ENCODE measurements at regions of chr20 and their contacts with region 1.

Region 1: GRCh38 chr20:53869466-53870258 is 200.7 kb downstream of the BCAS1 start:
- DNase-seq: peak; percentile 85
- H3K4me3 Mint-ChIP-seq: peak overlapping the region; percentile 57
- H3K27ac Mint-ChIP-seq: peak overlapping the region; percentile 90
- H3K4me1 Mint-ChIP-seq: peaks cover 67% of the 10 kb centered on the region
- H3K27me3 Mint-ChIP-seq: no peaks in the 10 kb centered on the region

Region 2: GRCh38 chr20:53364646-53365045 is 505.0 kb before region 1 on chr20:
- CTCF ChIA-PET with region 1: no interaction called
- intact Hi-C with region 1: no loop called
- DNase-seq: no peak
- H3K4me3 Mint-ChIP-seq: no peak overlapping the region
- H3K27ac Mint-ChIP-seq: no peak overlapping the region
- H3K4me1 Mint-ChIP-seq: peaks cover 5% of the 10 kb centered on the region
- H3K27me3 Mint-ChIP-seq: no peaks in the 10 kb centered on the region

Region 3: DNA sequence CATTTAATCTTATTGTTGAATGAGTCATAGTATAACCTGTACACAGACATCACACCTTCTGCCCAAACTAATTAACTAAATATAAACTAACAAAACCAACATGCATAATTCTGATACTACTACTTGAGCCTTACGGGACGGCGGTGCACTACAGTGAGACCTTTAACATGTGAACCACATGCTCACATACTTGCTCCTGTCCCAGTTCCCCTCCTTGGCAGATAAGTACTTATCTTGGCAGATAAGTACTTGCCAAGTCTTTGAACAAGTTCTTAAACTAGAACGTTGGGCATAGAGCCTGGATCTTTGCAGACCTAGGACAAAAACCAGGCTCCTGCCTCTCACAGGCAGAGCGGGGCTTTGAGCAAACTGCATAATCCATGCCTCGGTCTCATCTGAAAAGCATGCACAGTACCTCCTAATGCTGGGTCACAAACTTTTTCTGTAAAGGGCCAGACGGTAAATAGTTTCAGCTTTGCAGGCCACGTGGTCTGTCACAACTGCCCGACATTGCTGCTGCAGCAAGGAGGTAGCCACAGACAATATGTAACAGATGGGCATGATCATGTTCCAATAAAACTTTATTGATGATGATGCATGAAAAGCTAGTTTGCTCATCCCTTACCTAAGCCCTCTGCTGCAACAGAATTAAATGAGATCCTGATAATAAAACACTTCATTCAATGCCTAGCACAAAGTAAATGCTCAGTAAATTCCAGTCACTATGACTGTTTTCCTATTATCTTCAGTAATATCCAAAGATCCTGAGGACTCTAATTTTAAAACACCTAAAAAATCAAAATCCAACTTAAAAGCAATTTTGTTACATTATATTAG is 298.9 kb before region 1 on chr20:
- CTCF ChIA-PET with region 1: no interaction called
- intact Hi-C with region 1: no loop called
- DNase-seq: no peak
- H3K4me3 Mint-ChIP-seq: no peak overlapping the region
- H3K27ac Mint-ChIP-seq: no peak overlapping the region
- H3K4me1 Mint-ChIP-seq: peaks cover 62% of the 10 kb centered on the region
- H3K27me3 Mint-ChIP-seq: no peaks in the 10 kb centered on the region

Region 4: GRCh38 chr20:53652090-53652858 is 217.4 kb before region 1 on chr20:
- CTCF ChIA-PET with region 1: interaction called, 4 read pairs
- intact Hi-C with region 1: loop called (anchors 2 kb)
- DNase-seq: peak; percentile 26
- H3K4me3 Mint-ChIP-seq: peak overlapping the region; percentile 65
- H3K27ac Mint-ChIP-seq: peak overlapping the region; percentile 93
- H3K4me1 Mint-ChIP-seq: peaks cover 43% of the 10 kb centered on the region
- H3K27me3 Mint-ChIP-seq: no peaks in the 10 kb centered on the region

Region 5: DNA sequence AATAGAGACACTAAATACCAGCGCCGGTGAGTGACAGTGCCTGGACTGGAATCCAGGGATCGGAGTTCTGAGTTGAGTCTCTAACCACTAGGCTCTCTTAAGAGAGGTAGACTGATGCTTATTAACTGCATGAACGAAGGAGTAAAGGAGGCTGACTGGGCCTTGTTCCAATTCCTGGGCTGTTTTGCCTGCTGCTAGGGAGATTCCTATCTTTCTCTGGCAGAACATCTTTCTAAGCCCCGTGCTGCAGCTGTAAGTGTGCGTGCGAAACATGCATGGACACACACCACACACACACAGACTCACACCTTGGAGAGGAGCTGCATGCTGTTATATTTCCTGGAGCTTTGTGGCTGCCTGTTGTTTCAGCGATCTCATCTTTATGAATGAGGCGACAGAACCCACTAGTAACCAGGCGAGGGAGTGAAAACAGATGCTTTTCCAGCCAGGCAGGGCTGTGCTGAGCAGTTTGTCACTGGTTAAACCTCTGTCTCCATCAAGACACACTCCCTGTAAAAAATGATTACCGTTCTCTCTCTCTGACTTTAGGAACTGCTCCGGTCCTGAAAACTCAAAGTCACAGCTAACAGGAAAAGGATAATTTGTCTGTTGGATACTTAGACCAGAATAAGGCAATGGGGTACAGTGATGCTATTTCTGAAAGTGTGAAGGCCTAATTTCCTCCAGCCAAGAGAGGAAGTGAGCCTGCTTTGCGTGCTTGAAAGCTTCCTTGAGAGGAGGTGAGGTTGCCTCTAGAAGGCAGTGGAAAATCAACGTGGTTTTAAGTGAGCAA is 118.6 kb before region 1 on chr20:
- CTCF ChIA-PET with region 1: interaction called, 5 read pairs
- intact Hi-C with region 1: loop called (anchors 1 kb)
- DNase-seq: peak; percentile 66
- H3K4me3 Mint-ChIP-seq: peak overlapping the region; percentile 32
- H3K27ac Mint-ChIP-seq: peak overlapping the region; percentile 91
- H3K4me1 Mint-ChIP-seq: peaks cover 71% of the 10 kb centered on the region
- H3K27me3 Mint-ChIP-seq: no peaks in the 10 kb centered on the region

Region 6: GRCh38 chr20:53800808-53801604 is 68.7 kb before region 1 on chr20:
- CTCF ChIA-PET with region 1: no interaction called
- intact Hi-C with region 1: no loop called
- DNase-seq: no peak
- H3K4me3 Mint-ChIP-seq: no peak overlapping the region
- H3K27ac Mint-ChIP-seq: no peak overlapping the region
- H3K4me1 Mint-ChIP-seq: no peaks in the 10 kb centered on the region
- H3K27me3 Mint-ChIP-seq: no peaks in the 10 kb centered on the region

Region 7: GRCh38 chr20:53891306-53891944 is 21.8 kb after region 1 on chr20:
- CTCF ChIA-PET with region 1: no interaction called
- intact Hi-C with region 1: loop called (anchors 1 kb)
- DNase-seq: no peak
- H3K4me3 Mint-ChIP-seq: no peak overlapping the region
- H3K27ac Mint-ChIP-seq: no peak overlapping the region
- H3K4me1 Mint-ChIP-seq: peaks cover 48% of the 10 kb centered on the region
- H3K27me3 Mint-ChIP-seq: no peaks in the 10 kb centered on the region

Region 8: DNA sequence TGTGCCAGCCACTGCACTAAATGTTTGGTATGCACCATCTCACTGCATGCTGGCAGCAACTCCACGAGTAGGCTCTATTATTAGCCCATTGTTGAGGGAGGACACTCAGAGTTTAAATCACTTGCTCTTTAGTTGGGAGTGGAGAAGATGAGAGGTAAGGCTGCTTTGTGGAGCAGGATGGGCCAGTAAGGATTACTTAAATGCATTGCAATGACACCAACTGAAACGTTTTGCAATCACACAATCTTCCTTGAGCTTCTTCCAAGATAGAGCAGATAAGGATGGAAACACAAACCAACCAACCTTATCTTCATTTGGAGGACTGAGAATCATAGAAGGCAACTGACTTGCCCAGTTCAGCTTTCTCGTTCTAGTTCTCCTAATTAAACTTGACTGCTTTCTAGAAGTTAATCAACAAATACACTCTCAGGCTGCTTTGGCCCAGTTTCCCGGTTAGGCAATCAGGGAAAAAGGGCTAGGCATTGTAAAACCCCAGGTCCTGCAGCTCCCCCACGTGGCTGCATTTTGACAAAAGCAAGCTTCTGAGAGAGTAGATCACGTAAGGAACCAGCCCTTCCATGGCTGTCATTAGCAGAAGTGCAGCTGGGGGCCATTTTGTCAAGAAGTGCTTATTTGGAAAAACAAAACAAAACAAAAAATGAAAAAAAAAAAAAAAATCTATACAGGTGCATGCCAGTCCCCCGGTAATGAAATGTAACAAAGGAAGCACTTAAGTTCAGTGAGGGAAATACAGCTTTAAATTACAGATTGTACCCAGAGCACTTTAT is 70.1 kb after region 1 on chr20:
- CTCF ChIA-PET with region 1: interaction called, 6 read pairs
- intact Hi-C with region 1: loop called (anchors 2 kb)
- DNase-seq: peak; percentile 92
- H3K4me3 Mint-ChIP-seq: no peak overlapping the region
- H3K27ac Mint-ChIP-seq: no peak overlapping the region
- H3K4me1 Mint-ChIP-seq: peaks cover 38% of the 10 kb centered on the region
- H3K27me3 Mint-ChIP-seq: no peaks in the 10 kb centered on the region

Measured in activated naive CD4-positive, alpha-beta T cell treated with anti-CD3 and anti-CD28 coated beads for 36 hours (primary cell).